Natural killer cell (primary cell): ENCODE measurements at regions of chr1 and their contacts with region 1.

Region 1: DNA sequence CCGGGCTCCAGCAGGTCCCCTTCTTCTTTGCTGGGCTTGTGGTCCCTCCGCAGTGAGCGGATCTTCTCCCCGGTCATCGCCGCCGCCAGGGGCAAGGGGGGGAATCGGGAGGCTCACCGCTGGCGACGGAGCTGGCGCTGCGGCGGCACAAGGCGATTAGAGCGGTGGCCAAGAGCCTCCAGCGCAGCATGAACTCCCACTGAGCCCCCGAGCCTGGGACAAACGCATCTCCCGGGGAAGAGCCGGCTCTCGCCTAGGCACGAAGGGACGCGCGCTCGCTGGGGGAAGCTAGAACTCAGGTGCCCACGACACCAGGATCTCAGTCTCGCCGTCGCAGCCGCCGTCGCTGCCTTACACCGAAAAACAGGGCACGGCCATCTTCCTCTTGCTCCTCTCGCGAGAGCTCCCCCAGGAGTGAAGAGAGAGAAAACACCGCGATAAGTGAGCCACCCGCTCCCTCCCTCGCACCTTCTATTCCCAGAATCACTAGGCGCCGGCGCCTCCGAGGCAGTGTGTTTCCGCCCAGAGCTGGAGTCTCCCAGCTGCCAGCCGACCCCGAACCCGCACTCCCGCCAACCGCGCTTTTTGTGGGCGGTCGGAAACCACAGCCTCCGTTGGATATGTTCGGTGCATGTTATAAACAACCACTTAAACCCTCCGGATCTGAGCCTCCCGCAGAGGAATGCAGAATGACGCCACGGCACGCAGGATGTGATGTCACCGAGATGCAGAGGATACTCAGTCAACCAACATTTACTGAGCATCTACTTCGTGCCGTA is at the start of gene ANKRD13C:
- DNase-seq: peak; percentile 87 to 96
- ATAC-seq: peak; percentile 90 to 93 (median 90)
- H3K4me3 ChIP-seq: peak within 1 kb of the TSS; percentile 87
- H3K4me3 Mint-ChIP-seq: peak within 1 kb of the TSS; percentile 98
- H3K27ac ChIP-seq: peak within 1 kb of the TSS; percentile 91
- H3K27ac Mint-ChIP-seq: peak within 1 kb of the TSS; percentile 99
- H3K4me1 ChIP-seq: peaks cover 19% of the 10 kb centered on the region
- H3K4me1 Mint-ChIP-seq: peaks cover 30 to 35% of the 10 kb centered on the region in 2 donors
- H3K27me3 ChIP-seq: no peaks in the 10 kb centered on the region
- H3K27me3 Mint-ChIP-seq: no peaks in the 10 kb centered on the region
- CTCF ChIP-seq: no peak
- total RNA-seq, gene ANKRD13C: 32.2 to 33.7 (median 32.8) TPM

Region 2: DNA sequence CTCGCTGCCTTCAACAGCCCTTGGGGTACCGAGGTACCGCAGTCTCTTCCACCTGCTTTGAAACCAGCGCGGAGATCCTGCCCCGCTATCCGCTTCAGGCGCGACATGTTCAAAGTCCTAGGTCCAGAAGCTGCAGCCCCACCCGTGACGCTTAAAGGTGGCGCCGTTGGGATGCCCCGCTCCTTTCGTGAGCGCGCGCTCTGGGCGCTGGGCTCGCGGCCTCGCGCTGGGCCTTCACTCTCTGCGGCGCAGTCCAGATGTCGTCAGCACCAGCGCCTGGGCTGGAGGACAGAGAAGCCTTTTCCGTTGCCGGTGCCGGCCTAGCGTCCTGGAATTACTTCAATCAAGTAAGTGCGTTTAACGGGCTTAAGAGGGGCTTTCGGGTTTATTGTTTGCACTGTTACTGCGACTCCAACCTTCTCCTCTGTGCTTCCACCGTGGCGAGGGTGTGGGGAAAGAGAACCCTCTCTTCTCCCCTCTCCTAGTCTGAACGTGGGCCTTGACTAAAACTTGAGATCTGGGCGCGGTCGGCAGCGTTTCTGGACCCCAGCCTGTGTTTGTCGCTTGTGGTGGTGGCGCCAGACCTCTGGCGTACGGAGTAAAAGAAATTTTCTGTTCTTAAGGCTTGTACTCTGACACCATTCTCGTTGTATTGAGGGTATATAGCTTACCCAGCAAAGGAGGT is 148.9 kb before region 1 on chr1 and contains the start of gene LRRC40:
- intact Hi-C with region 1: loop called (anchors 5 kb)
- DNase-seq: peak; percentile 97 to 98
- ATAC-seq: peak; percentile 96 to 100 (median 97)
- H3K4me3 ChIP-seq: peak within 1 kb of the TSS; percentile 58
- H3K4me3 Mint-ChIP-seq: peak within 1 kb of the TSS; percentile 97
- H3K27ac ChIP-seq: peak within 1 kb of the TSS; percentile 88
- H3K27ac Mint-ChIP-seq: peak within 1 kb of the TSS; percentile 98 to 99
- H3K4me1 ChIP-seq: peaks cover 21% of the 10 kb centered on the region
- H3K4me1 Mint-ChIP-seq: peaks cover 41 to 61% of the 10 kb centered on the region in 2 donors
- H3K27me3 ChIP-seq: no peaks in the 10 kb centered on the region
- H3K27me3 Mint-ChIP-seq: no peaks in the 10 kb centered on the region
- CTCF ChIP-seq: no peak
- total RNA-seq, gene LRRC40: 15.5 to 18.4 (median 16.5) TPM

Region 3: DNA sequence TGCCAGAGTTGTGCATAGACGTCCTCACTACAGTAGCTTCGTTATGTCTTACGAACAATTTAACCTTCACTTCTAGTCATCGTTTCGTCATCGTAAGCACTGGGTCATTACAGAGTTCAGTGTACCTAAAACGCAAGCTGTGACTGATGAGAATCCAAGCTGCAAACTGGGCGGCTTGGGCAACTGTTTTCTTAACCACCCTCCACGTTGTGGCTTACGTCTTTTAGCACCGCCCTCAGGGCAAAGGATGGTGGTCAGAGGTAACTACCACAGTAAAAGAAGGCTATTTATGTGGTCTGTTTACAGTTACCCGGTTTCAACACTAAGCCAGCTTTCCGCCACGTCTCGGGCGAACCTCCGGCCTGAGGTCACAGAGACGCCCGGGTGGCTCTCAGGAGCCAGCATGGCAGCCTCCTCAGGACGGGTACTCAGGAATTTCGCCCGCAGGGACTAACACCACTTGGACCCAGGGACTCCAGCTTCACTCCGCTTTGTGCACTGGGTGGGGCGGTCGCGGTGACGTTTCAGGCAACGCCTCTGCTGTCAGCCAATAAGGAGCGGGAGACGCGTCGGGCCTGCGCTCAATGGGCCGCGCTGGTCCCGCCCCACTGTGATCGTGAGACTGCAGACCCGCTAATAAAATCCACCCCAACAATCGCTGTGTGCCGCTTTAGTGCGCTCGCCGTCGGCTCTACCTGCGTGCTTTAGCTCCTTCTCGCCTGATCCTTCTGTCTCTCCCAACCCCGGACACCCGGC is 56.3 kb after region 1 on chr1 and contains the start of gene CTH:
- intact Hi-C with region 1: loop called (anchors 1 kb)
- DNase-seq: peak; percentile 92 to 96
- ATAC-seq: peak; percentile 93 to 97 (median 93)
- H3K4me3 ChIP-seq: peak within 1 kb of the TSS; percentile 69
- H3K4me3 Mint-ChIP-seq: peak within 1 kb of the TSS; percentile 99
- H3K27ac ChIP-seq: peak within 1 kb of the TSS; percentile 91
- H3K27ac Mint-ChIP-seq: peak within 1 kb of the TSS; percentile 90 to 93
- H3K4me1 ChIP-seq: peaks cover 8% of the 10 kb centered on the region
- H3K4me1 Mint-ChIP-seq: peaks cover 15 to 18% of the 10 kb centered on the region in 2 donors
- H3K27me3 ChIP-seq: peaks cover 4% of the 10 kb centered on the region
- H3K27me3 Mint-ChIP-seq: peaks cover 13 to 19% of the 10 kb centered on the region in 2 donors
- CTCF ChIP-seq: no peak
- total RNA-seq, gene CTH: 3.0 to 7.6 (median 3.6) TPM

Region 4: DNA sequence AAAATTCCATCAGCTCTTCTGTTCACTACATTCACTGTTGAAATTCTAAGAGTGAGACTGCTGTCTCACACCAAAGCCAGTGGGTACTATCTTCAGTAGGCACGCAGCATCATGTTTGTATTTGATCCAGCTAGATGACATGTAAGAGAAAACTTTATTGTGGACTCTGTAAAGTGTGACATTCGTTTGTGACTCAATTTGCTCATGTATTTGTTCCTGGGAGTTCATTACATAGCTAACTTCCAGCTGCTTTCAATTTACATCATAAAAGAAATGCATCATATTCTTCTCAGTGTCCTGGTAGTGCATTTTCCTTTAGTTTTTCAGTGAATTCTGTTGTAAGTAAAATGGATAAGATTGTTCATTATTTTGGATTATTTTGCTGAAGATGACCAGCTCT is 88.0 kb after region 1 on chr1:
- intact Hi-C with region 1: no loop called
- DNase-seq: no peak
- ATAC-seq: no peak
- H3K4me3 ChIP-seq: no peak overlapping the region
- H3K4me3 Mint-ChIP-seq: no peak overlapping the region
- H3K27ac ChIP-seq: no peak overlapping the region
- H3K27ac Mint-ChIP-seq: no peak overlapping the region
- H3K4me1 ChIP-seq: no peaks in the 10 kb centered on the region
- H3K4me1 Mint-ChIP-seq: no peaks in the 10 kb centered on the region
- H3K27me3 ChIP-seq: no peaks in the 10 kb centered on the region
- H3K27me3 Mint-ChIP-seq: no peaks in the 10 kb centered on the region
- CTCF ChIP-seq: no peak

Region 5: GRCh38 chr1:71080739-71081696 is 726.5 kb after region 1 on chr1 and contains the start of gene ZRANB2:
- intact Hi-C with region 1: loop called (anchors 1 kb)
- DNase-seq: peak; percentile 85 to 96
- ATAC-seq: peak; percentile 95 to 99 (median 95)
- H3K4me3 ChIP-seq: peak within 1 kb of the TSS; percentile 99
- H3K4me3 Mint-ChIP-seq: peak within 1 kb of the TSS; percentile 93
- H3K27ac ChIP-seq: peak within 1 kb of the TSS; percentile 90
- H3K27ac Mint-ChIP-seq: peak within 1 kb of the TSS; percentile 99
- H3K4me1 ChIP-seq: peaks cover 11% of the 10 kb centered on the region
- H3K4me1 Mint-ChIP-seq: peaks cover 27 to 30% of the 10 kb centered on the region in 2 donors
- H3K27me3 ChIP-seq: no peaks in the 10 kb centered on the region
- H3K27me3 Mint-ChIP-seq: peaks cover 23 to 35% of the 10 kb centered on the region in 2 donors
- CTCF ChIP-seq: peak; percentile 59
- total RNA-seq, gene ZRANB2: 114 to 133 (median 128) TPM